GM12878 (cell line): ENCODE measurements at regions of chr6 and their contacts with region 1.

Region 1: GRCh38 chr6:106187424-106187982 is 101.4 kb downstream of the PRDM1 start:
- DNase-seq: no peak
- ATAC-seq: peak; percentile 28; the same call in 1 of the 3 replicates
- H3K4me3 ChIP-seq: no peak overlapping the region
- H3K27ac ChIP-seq: peak overlapping the region; percentile 56; the same call in 1 of the 2 replicates
- H3K4me1 ChIP-seq: peaks cover 28% of the 10 kb centered on the region
- H3K27me3 ChIP-seq: no peaks in the 10 kb centered on the region
- CTCF ChIP-seq: no peak
- EP300 ChIP-seq: no peak
- POLR2A ChIP-seq: no peak
- RAD21 ChIP-seq: no peak

Region 2: DNA sequence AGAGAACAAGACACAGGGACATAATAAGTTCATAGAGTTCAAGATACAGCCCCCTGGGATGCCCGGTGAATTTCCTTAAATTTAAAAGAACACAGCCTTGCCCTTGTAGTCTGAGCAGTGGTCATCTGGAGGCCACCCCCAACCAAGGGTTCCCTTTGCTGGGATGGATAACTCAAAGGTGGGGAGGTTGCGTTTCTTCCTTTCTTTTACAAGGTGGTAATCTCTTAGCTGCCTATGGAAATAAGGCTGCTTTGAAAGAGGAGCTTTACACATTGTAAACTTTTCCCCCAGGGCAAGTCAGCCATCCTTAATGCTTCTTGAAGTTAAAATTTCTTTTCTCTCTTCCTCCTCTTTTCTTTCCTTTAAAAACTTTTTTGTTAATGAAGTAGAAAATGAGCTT is 172.6 kb before region 1 on chr6:
- CTCF ChIA-PET with region 1: no interaction called
- POLR2A ChIA-PET with region 1: no interaction called
- RAD21 ChIA-PET with region 1: no interaction called
- SMC1A ChIA-PET with region 1: no interaction called
- in situ Hi-C with region 1: no loop called
- intact Hi-C with region 1: no loop called
- DNase-seq: no peak
- ATAC-seq: no peak
- H3K4me3 ChIP-seq: no peak overlapping the region
- H3K27ac ChIP-seq: no peak overlapping the region
- H3K4me1 ChIP-seq: no peaks in the 10 kb centered on the region
- H3K27me3 ChIP-seq: no peaks in the 10 kb centered on the region
- CTCF ChIP-seq: no peak
- EP300 ChIP-seq: no peak
- POLR2A ChIP-seq: no peak
- RAD21 ChIP-seq: no peak

Region 3: GRCh38 chr6:106214531-106214930 is 27.0 kb after region 1 on chr6:
- CTCF ChIA-PET with region 1: interaction called, 7 read pairs
- POLR2A ChIA-PET with region 1: interaction called, 3 read pairs
- RAD21 ChIA-PET with region 1: interaction called, 4 read pairs
- SMC1A ChIA-PET with region 1: interaction called, 61 read pairs
- in situ Hi-C with region 1: no loop called
- intact Hi-C with region 1: no loop called
- DNase-seq: no peak
- ATAC-seq: no peak
- H3K4me3 ChIP-seq: no peak overlapping the region
- H3K27ac ChIP-seq: no peak overlapping the region
- H3K4me1 ChIP-seq: no peaks in the 10 kb centered on the region
- H3K27me3 ChIP-seq: no peaks in the 10 kb centered on the region
- CTCF ChIP-seq: no peak
- EP300 ChIP-seq: no peak
- POLR2A ChIP-seq: no peak
- RAD21 ChIP-seq: no peak